Kidney (tissue), 22 donors: ENCODE measurements at regions of chr6 and their contacts with region 1.

Region 1: GRCh38 chr6:116531675-116532570 is 13.6 kb downstream of the TRAPPC3L start:
- DNase-seq: peak in 4 of 5 donors; percentile 45 to 78 (median 56)
- H3K4me3 ChIP-seq: no peak overlapping the region
- H3K27ac ChIP-seq: no peak overlapping the region
- H3K4me1 ChIP-seq: peaks cover 2 to 7% (median 7%) of the 10 kb centered on the region in 3 donors
- H3K27me3 ChIP-seq: no peaks in the 10 kb centered on the region
- CTCF ChIP-seq: peak; percentile 68

Region 2: DNA sequence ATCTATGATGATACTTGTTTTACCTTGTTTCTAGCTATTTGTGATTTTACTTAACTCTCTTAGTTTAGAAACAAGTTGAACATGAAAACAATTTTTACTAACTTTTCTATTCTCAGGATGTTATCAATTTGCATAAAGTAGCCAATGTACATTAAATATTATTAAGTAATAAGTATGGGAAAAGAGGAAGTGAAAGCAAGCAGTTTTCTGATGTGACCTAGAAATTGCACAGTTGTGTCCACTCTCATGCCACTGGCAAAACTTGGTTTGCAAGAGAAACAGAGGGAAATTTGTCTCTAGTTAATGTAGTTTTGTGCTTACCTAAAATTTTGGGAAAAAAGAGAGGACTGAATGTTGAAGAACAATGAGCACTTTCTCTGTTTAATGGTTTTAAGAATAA is 232.9 kb before region 1 on chr6:
- intact Hi-C with region 1: loop called (anchors 10 kb)
- DNase-seq: no peak
- H3K4me3 ChIP-seq: no peak overlapping the region
- H3K27ac ChIP-seq: no peak overlapping the region
- H3K4me1 ChIP-seq: no peaks in the 10 kb centered on the region
- H3K27me3 ChIP-seq: no peaks in the 10 kb centered on the region
- CTCF ChIP-seq: no peak